ENCODE measurements at regions of chr3 and their contacts with region 1.

Region 1: DNA sequence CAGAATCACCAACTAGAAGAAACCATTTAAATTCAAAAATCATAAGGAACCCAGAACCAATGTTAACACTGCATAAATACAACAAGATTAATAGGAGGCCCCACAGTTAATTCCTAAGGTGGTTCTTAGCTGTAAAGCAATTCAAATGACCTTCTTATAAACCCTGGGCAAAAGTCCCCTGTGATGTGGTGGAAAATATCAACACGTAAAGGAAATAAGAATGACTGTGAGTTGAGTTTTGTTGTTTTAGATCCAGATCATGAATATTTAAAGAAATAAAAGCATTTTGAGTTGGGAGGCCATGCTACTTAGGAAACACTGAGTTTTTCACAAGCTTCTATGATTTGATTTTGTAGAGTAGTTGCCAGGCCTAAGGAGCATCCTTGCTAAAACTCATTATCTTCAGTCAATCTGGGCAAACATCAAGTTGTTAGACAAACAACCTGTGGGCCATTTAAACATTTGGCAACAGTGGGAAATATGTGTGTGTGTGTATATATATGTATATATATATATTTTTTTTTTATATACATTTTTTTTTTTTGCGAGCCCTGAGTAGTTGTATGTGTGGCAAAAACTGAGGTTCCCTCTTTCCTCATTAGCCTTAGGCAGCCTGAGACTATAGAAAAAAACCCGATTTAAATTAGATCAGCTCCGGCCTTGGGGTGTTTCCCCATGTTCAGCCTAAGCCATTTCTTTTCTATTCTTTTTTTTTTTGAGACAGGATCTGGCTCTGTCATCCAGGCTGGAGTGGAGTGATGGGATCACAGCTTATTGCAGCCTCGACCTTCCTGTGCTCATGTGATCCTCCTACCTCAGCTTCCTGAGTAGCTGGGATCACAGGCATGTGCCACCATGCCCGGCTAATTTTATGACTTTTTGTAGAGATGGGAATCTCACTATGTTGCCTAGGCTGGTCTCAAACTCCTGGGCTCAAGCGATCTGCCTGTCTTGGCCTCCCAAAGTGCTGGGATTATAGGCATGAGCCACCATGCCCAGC is 8.0 kb upstream of the PXK start:
- DNase-seq: peak in 3 of 14 experiments; percentile 22 to 31 (median 22)
- ATAC-seq: peak; percentile 63
- H3K4me3 ChIP-seq: no peak overlapping the region
- H3K4me3 Mint-ChIP-seq: no peak overlapping the region
- H3K27ac ChIP-seq: no peak overlapping the region
- H3K27ac Mint-ChIP-seq: peak overlapping the region; percentile 81
- H3K4me1 ChIP-seq: peaks cover 9% of the 10 kb centered on the region
- H3K4me1 Mint-ChIP-seq: peaks cover 14% of the 10 kb centered on the region
- H3K27me3 ChIP-seq: no peaks in the 10 kb centered on the region
- H3K27me3 Mint-ChIP-seq: no peaks in the 10 kb centered on the region
- CTCF ChIP-seq: no peak

Region 2: GRCh38 chr3:58414538-58415197 is 90.0 kb after region 1 on chr3:
- CTCF ChIA-PET with region 1: no interaction called
- POLR2A ChIA-PET with region 1: no interaction called
- intact Hi-C with region 1: loop called (anchors 1 kb)
- DNase-seq: peak in 13 of 14 experiments; percentile 8 to 76 (median 21)
- ATAC-seq: peak; percentile 88
- H3K4me3 ChIP-seq: no peak overlapping the region
- H3K4me3 Mint-ChIP-seq: no peak overlapping the region
- H3K27ac ChIP-seq: no peak overlapping the region
- H3K27ac Mint-ChIP-seq: no peak overlapping the region
- H3K4me1 ChIP-seq: no peaks in the 10 kb centered on the region
- H3K4me1 Mint-ChIP-seq: no peaks in the 10 kb centered on the region
- H3K27me3 ChIP-seq: no peaks in the 10 kb centered on the region
- H3K27me3 Mint-ChIP-seq: no peaks in the 10 kb centered on the region
- CTCF ChIP-seq: peak; percentile 75

Measured in CD4-positive, alpha-beta T cell (primary cell).